ENCODE measurements at regions of chr19 and their contacts with region 1.

Region 1: DNA sequence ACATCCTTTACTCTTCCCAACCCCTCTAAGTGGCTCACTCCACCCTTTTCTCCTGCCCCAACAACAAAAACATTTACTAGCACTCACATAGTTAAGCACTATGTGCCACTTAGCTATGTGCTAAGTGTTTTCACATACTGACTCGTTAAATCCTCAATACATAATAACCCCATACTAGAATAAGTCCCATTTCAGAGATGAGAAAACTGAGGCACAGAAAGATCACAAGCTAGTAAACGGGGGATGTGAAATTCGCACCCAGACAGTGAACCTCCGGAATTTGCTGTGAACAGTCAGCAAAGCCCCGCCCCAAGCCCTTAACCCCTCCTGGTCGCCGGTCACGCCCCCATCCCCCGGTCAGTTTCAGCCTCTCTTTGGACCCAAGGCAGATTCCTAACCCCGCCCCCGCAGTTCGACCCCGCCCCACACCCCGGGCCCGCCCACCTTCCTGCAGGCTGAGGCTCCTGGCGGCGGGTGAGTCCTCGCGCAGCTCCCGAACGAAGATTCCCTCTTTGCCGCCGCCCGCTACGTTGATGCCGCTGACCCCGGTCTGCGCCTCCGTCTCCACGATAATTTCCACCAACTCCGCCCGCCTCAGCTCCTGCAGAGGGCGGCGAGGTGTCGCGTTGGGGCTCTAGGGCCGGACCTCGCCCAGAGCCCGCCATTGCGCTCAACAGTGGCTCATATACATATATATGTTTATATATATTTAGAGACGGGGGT is 9.8 kb downstream of the PRX start:
- DNase-seq: peak; percentile 91 to 92
- ATAC-seq: peak; percentile 77 to 84 (median 82)
- H3K4me3 ChIP-seq: peak overlapping the region; percentile 70
- H3K27ac ChIP-seq: peak overlapping the region; percentile 80
- H3K4me1 ChIP-seq: no peaks in the 10 kb centered on the region
- H3K27me3 ChIP-seq: no peaks in the 10 kb centered on the region
- CTCF ChIP-seq: no peak

Region 2: GRCh38 chr19:40358773-40359172 is 44.6 kb before region 1 on chr19:
- intact Hi-C with region 1: loop called (anchors 5 kb)
- DNase-seq: no peak
- ATAC-seq: peak in 2 of 4 donors; percentile 14 to 21
- H3K4me3 ChIP-seq: no peak overlapping the region
- H3K27ac ChIP-seq: no peak overlapping the region
- H3K4me1 ChIP-seq: no peaks in the 10 kb centered on the region
- H3K27me3 ChIP-seq: no peaks in the 10 kb centered on the region
- CTCF ChIP-seq: no peak

Region 3: DNA sequence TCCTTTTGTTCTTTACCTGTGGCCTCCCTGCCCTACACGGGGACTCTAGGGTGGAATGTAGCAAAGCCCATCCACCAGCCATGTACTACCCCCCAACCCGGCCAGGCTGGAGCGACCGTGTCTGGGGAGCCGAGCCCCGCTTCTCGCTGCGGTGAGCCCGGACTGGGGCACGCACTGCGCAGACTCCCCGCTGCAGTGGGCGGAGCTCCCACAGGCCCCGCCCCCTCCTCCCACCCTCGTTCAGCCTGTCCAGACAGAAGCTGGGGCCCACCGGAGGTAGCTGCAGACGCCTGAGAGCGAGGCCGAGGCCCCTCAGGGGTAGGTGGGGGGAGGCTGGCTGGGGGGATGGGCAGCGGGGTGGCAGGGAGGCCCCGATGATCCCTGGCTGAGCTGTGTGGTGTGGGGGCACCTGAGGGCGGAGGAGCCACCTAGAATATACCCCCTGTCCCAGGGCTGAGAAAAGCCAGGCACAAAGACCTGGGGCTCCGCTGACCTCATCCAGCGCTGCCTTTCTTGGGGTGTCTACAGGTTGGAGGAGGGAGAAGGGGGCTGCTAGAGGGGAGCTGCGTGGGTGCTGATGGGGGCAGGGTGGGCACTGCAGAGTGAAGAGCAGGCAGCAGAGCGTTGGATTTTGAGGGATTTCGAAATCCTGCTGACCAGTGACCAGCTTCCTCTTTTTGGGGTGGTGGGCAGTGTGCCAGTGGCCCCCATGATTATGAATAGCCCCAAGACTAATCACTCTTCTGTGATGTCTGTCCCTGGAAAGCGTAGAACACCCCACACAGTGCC is 37.6 kb before region 1 on chr19:
- intact Hi-C with region 1: loop called in 1 of 2 experiments (anchors 5 kb)
- DNase-seq: peak in 1 of 2 donors; percentile 61
- ATAC-seq: peak; percentile 11 to 47 (median 42)
- H3K4me3 ChIP-seq: peak overlapping the region; percentile 17
- H3K27ac ChIP-seq: no peak overlapping the region
- H3K4me1 ChIP-seq: peaks cover 9% of the 10 kb centered on the region
- H3K27me3 ChIP-seq: no peaks in the 10 kb centered on the region
- CTCF ChIP-seq: no peak

Region 4: DNA sequence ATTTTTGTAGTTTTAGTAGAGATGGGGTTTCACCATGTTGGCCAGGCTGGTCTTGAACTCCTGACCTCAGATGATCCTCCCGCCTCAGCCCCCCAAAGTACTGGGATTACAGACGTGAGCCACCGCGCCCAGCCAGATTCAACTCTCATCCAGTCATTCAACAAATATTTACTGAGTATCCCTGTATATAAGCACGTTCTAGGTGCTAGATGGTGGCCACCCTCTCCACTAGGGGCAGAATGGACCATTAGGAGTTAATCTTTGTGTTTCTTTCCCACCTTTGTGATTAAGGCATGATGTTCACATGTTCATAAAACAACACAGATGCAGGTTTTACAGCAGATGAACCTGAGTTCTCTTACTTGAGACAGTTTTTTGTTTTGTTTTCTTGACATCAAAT is 180.6 kb after region 1 on chr19:
- intact Hi-C with region 1: no loop called
- DNase-seq: no peak
- ATAC-seq: no peak
- H3K4me3 ChIP-seq: no peak overlapping the region
- H3K27ac ChIP-seq: no peak overlapping the region
- H3K4me1 ChIP-seq: no peaks in the 10 kb centered on the region
- H3K27me3 ChIP-seq: no peaks in the 10 kb centered on the region
- CTCF ChIP-seq: no peak

Measured in psoas muscle (tissue), 8 donors.